GM18951 (cell line): ENCODE measurements at regions of chr7 and their contacts with region 1.

Region 1: GRCh38 chr7:81499262-81500116 is 270.4 kb downstream of the HGF start:
- POLR2A ChIP-seq: no peak

Region 2: DNA sequence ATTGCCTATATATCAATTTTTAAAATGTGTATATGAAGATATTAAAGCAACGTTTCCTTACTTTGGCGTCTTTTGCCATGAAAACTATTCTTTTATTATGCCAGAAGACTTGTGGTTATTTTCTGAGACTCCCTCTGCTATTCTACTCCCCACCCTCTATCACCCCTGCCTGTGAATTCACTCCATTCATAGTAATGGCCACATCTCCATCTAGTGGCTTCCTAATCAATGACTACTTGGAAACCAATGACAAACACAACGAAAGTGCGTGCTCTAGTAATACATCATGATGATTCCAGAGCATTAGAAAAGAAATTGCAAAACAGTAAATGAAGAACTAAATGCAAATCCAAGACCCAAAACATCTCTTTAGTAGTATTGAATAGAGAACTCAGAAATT is 457.0 kb after region 1 on chr7:
- in situ Hi-C with region 1: loop called (anchors 25 kb)
- POLR2A ChIP-seq: no peak

Region 3: GRCh38 chr7:82572195-82572880 is 1072.8 kb after region 1 on chr7:
- in situ Hi-C with region 1: loop called (anchors 25 kb)
- POLR2A ChIP-seq: no peak